ENCODE measurements at regions of chr7 and their contacts with region 1.

Region 1: DNA sequence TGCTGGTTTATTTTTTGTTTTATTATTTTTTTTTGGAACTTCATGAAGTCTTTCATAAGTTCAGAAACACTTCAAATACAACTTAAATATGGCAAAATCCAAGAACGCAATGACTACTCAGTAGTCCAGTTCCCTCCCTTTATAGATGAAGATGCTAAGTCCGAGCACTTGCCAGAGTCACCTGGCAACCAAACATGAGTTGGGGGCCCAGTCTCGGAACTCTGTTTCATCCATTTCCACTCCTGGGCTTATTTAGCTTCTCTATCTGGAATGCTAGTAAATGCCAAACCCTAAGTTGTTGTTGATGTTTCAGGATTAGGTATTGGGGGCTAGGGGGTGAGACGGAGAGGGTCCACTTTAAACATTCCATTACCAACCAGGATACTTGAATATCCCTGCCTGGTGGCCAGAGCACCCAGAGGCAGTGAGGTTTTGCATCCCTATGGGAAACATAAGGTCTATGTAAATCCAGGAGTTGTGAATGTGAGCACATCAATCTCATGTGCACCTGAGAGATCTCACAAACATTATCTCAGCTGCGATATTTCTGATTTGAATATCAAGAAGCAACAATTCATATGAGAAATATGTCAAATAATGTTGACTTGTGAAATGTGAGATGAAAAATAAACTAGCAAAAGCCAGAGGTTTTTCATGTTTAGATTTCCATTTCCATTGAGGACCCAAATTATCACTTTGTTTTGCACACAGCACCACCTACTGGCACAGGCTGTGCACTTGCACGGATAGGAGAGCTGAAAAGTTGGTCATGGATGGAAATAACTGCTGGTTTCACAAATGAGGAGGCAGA is 129.3 kb downstream of the PKD1L1 start:
- DNase-seq: peak; percentile 80
- H3K4me3 ChIP-seq: no peak overlapping the region
- H3K27ac ChIP-seq: no peak overlapping the region
- H3K4me1 ChIP-seq: peaks cover 9% of the 10 kb centered on the region
- CTCF ChIP-seq: peak; percentile 100

Region 2: GRCh38 chr7:47266131-47266706 is 552.8 kb before region 1 on chr7:
- CTCF ChIA-PET with region 1: interaction called, 8 read pairs
- POLR2A ChIA-PET with region 1: interaction called, 3 read pairs
- intact Hi-C with region 1: loop called (anchors 1 kb)
- DNase-seq: peak; percentile 67
- H3K4me3 ChIP-seq: no peak overlapping the region
- H3K27ac ChIP-seq: no peak overlapping the region
- H3K4me1 ChIP-seq: no peaks in the 10 kb centered on the region
- CTCF ChIP-seq: peak; percentile 98

Region 3: GRCh38 chr7:47444379-47445057 is 374.5 kb before region 1 on chr7:
- CTCF ChIA-PET with region 1: no interaction called
- POLR2A ChIA-PET with region 1: no interaction called
- intact Hi-C with region 1: loop called (anchors 1 kb)
- DNase-seq: peak; percentile 52
- H3K4me3 ChIP-seq: no peak overlapping the region
- H3K27ac ChIP-seq: no peak overlapping the region
- H3K4me1 ChIP-seq: peaks cover 3% of the 10 kb centered on the region
- CTCF ChIP-seq: peak; percentile 83

Region 4: DNA sequence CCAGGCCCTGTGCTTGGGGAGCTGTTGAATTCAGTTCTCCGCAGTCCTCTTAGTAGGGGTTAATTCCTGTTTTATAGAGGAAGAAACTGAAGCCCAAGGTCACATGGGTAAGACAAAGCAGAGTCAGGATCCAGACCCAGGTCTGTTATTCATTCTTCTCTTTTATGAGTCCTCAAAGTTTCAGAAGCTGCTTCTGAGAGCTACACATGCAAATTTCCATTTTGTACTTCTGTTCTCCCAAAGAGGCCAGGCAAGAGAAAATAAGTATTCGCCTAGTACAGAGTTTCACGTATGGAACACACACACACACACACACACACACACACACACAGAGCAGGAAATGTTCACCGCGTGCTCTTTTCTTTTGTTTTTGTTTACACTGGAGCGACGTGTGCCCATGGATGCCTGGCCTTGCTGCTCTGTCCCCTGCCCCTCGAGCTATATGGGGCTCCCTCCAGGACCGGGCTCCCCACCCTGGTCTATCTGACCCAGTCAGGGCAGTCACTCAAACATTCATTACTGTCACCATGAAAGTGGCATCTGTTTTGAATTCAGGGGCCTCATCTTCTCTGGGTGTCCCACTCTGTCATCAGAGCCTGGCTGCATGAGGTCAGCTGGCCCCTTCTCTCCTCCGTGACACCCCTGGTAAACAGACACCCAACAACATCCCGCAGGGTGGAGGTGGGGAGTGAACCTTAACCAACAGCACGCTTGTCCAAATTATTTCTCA is 321.5 kb before region 1 on chr7:
- CTCF ChIA-PET with region 1: interaction called, 3 read pairs
- POLR2A ChIA-PET with region 1: no interaction called
- intact Hi-C with region 1: loop called (anchors 1 kb)
- DNase-seq: peak; percentile 87
- H3K4me3 ChIP-seq: peak overlapping the region; percentile 32
- H3K27ac ChIP-seq: peak overlapping the region; percentile 86
- H3K4me1 ChIP-seq: peaks cover 53% of the 10 kb centered on the region
- CTCF ChIP-seq: no peak

Region 5: DNA sequence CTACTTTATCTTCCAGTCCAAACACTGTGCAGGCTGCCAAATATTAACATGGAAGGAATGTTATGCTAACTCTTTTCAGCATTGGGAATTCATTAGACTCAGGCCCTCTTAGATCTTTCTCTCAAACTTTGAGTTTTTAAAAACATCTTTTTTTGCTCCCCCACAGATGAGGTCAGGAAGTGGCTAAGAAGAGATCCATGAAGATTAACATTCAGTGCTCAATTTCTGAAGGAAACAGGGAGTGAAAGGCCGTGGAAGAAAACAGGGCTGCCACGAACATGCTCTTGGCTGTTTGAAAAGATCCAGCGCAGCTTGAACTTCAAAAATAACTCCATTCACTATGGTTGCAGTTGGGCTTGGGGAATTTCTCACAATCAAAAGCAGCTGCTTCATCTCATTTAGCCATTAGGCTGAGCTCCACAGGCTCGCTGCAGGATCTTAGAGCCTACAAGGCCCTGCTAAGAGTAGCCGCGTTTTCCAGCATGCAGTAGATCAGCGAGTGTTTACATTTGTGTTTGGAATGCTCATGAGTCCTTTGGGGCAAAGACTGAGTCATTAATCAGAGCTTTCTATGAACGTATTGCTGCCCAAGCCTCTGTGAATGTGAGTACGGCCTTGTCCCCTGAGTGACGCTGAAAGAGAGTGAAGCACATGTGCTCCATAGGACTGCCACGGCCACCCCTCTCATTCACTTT is 195.9 kb before region 1 on chr7:
- CTCF ChIA-PET with region 1: no interaction called
- POLR2A ChIA-PET with region 1: no interaction called
- intact Hi-C with region 1: loop called (anchors 1 kb)
- DNase-seq: no peak
- H3K4me3 ChIP-seq: peak overlapping the region; percentile 46
- H3K27ac ChIP-seq: peak overlapping the region; percentile 55
- H3K4me1 ChIP-seq: peaks cover 79% of the 10 kb centered on the region
- CTCF ChIP-seq: no peak

Region 6: DNA sequence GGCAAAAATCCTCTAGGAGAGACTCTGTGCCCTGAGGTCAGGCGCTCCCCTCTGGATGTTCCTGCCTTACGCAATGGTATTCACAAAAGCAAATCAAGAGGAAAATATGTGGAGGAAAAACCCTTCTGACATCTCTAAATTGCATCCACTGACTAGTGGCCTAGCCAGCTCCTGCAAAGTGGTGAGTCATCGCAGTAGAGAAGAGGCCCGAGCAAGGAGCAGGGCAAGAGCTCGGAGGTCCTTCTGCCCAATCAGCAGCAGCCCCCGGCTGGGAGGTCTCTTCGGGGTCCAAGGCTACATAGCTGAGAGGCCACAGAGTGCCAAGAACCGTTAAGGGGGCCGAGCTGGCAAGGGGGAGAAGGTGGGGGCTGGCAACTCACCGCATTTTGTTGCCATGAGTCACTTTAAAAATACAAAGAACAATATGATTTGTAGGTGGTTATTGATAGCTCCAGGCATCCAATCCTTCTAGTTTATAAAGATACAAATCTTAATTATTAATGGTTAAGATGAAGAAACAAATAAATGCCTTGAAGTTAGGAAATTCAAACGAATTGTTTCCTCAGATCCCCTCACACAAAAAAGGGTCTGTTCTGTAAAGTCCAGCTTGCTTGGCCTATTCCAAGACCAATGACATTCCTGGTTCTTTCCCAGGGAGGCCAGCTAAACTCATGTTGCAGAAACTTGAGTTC is 32.3 kb before region 1 on chr7:
- CTCF ChIA-PET with region 1: no interaction called
- POLR2A ChIA-PET with region 1: no interaction called
- intact Hi-C with region 1: no loop called
- DNase-seq: no peak
- H3K4me3 ChIP-seq: no peak overlapping the region
- H3K27ac ChIP-seq: no peak overlapping the region
- H3K4me1 ChIP-seq: no peaks in the 10 kb centered on the region
- CTCF ChIP-seq: no peak

Region 7: DNA sequence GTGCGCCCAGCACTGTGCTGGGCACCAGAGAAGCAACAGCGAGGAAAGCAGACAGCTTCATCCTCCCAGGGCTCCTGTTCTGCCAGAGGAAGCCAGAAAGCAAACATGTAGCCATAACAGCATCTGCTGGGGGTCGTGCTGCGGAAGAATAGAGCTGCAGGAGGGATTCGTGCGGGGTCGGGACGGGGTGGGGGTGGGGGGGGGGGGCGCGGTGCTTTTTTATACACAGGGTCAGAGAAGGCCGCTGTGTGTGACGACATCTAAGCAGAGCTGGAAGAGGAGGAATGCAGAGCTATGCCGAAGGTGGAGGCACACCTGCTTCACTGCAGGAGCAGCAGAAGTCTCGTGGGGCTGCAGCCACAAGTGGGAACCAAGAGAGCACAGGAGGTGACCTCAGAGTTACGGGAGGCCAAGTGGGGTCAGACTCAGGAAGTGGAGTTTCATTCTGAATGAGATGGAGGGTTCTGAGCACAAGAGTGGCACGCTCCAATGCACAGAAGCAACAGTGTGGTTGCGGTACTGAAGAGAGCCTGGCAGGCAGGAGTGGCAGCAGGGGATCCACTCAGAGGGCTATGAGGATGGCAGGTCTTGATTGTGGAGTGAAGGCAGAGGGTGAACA is 118.2 kb after region 1 on chr7:
- CTCF ChIA-PET with region 1: interaction called, 3 read pairs
- POLR2A ChIA-PET with region 1: no interaction called
- intact Hi-C with region 1: loop called (anchors 2 kb)
- DNase-seq: peak; percentile 83
- H3K4me3 ChIP-seq: peak overlapping the region; percentile 42
- H3K27ac ChIP-seq: peak overlapping the region; percentile 80
- H3K4me1 ChIP-seq: peaks cover 38% of the 10 kb centered on the region
- CTCF ChIP-seq: no peak